ENCODE measurements at regions of chr5 and their contacts with region 1.

Region 1: DNA sequence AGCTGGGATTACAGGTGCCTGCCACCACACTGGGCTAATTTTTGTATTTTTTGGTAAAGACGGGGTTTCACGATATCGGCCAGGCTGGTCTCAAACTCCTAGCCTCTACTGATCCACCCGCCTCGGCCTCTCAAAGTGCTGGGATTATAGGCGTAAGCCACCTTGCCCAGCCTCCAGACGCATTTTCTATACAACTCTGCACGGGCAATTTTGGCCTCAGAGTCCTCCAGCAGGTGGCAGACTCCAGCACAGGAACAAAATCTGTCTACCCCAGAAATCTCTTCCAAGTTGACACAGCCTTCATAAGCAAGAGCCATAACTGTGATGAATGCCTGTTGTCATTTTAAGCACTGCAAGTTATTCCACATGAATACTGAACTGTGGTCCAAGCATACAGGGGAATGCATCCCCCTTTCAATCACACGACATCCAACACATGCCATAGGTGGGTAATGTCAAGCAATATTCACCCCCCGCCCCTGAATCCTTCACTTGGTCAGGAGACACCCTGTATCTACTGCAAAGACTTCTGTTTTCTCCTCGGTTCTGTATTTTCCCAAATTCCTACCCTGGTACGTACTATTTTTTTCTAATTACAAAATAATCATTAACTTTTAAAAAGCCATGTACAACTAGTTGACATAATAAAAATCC is 50.8 kb downstream of the ALDH7A1 start:
- DNase-seq: no peak
- H3K4me3 ChIP-seq: no peak overlapping the region
- CTCF ChIP-seq: no peak
- POLR2A ChIP-seq: no peak

Region 2: GRCh38 chr5:126499853-126500342 is 44.3 kb before region 1 on chr5:
- intact Hi-C with region 1: no loop called
- DNase-seq: no peak
- H3K4me3 ChIP-seq: no peak overlapping the region
- CTCF ChIP-seq: no peak
- POLR2A ChIP-seq: no peak

Region 3: DNA sequence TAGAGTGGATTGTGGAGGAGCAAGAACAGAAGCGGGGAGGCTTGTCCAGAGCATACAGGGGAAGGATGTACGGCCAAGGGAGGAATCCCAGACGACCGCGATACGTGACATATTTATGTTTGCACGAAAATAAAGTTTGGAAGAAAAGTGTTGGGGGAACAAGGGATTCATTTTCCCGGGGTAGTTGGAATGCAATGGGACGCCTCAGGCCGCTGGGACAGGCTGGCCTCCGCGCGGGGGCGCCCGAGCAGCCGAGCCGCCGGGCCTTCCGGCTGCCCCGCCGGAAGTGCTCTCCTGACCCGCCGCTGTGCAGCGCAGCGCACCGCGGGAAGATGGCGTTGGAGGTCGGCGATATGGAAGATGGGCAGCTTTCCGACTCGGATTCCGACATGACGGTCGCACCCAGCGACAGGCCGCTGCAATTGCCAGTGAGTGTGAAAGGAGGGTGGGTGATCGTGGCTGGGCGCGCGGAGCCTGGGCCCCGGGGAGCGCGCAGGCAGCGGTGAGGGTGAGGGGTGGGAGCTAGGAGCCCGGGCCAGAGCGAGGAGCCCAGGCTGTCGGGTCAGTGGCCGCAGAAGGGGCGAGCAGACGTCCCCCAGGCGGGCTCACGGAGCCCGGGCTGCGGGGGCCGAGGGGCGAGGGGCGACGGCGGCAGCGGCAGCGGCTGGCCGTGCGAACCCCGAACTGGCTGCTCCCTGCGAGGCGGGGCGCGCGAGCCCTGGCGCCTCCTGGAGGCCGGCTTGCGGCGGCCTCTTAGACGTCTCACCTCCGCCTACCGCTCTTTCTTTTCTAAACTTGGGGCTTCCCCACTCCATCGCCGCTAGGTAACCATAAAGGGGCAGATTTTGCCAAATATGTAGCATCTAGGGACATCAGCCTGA is 56.7 kb after region 1 on chr5 and contains the start of gene PHAX:
- intact Hi-C with region 1: loop called (anchors 10 kb)
- DNase-seq: peak; percentile 58 to 93
- H3K4me3 ChIP-seq: peak within 1 kb of the TSS; percentile 100
- CTCF ChIP-seq: no peak
- POLR2A ChIP-seq: no peak
- total RNA-seq, gene PHAX: 31.4 to 38.0 (median 36.3) TPM